ENCODE measurements at regions of chr19 and their contacts with region 1.

Region 1: DNA sequence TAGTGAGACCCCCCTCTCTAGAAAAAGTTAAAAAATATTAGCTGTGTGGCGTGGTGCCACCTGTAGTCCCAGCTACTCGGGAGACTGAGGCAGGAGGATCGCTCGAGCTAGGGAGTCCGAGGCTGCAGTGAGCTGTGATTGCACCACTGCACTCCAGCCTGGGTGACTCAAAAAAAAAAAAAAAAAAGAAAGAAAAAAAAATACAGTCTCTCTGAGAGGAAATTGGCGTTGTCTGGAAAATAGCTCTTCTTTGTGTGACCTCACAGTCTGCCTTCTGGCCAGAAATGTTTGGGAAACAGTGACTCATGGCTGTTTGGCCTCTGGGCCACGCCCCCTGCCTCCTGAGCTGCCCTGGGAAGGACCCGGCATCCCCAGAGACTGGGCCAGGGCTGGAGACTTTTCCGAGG is 10.7 kb downstream of the MARCHF2 start:
- DNase-seq: peak; percentile 93
- ATAC-seq: peak; percentile 83
- H3K4me3 ChIP-seq: peak overlapping the region; percentile 28 to 64 (median 55); a peak in 5 of 6 replicates
- H3K27ac ChIP-seq: peak overlapping the region; percentile 86
- H3K4me1 ChIP-seq: peaks cover 39% of the 10 kb centered on the region
- H3K27me3 ChIP-seq: no peaks in the 10 kb centered on the region
- CTCF ChIP-seq: no peak
- EP300 ChIP-seq: no peak
- POLR2A ChIP-seq: no peak
- RAD21 ChIP-seq: no peak

Region 2: GRCh38 chr19:8321060-8321985 is 102.5 kb before region 1 on chr19 and contains the starts of genes NDUFA7 and RPS28:
- CTCF ChIA-PET with region 1: no interaction called
- POLR2A ChIA-PET with region 1: interaction called, 18 read pairs
- in situ Hi-C with region 1: no loop called
- intact Hi-C with region 1: no loop called
- DNase-seq: peak; percentile 85
- ATAC-seq: peak; percentile 81
- H3K4me3 ChIP-seq: peak within 1 kb of the TSS; percentile 69 to 97 (median 82)
- H3K27ac ChIP-seq: peak within 1 kb of the TSS; percentile 88
- H3K4me1 ChIP-seq: peaks cover 36% of the 10 kb centered on the region
- H3K27me3 ChIP-seq: no peaks in the 10 kb centered on the region; a peak in 1 of 5 replicates
- CTCF ChIP-seq: peak; percentile 79
- EP300 ChIP-seq: no peak
- POLR2A ChIP-seq: peak; percentile 90 to 92
- RAD21 ChIP-seq: peak; percentile 58
- total RNA-seq, gene NDUFA7: 57.2 and 64.5 TPM in 2 replicates
- total RNA-seq, gene RPS28: 281 and 319 TPM in 2 replicates

Region 3: DNA sequence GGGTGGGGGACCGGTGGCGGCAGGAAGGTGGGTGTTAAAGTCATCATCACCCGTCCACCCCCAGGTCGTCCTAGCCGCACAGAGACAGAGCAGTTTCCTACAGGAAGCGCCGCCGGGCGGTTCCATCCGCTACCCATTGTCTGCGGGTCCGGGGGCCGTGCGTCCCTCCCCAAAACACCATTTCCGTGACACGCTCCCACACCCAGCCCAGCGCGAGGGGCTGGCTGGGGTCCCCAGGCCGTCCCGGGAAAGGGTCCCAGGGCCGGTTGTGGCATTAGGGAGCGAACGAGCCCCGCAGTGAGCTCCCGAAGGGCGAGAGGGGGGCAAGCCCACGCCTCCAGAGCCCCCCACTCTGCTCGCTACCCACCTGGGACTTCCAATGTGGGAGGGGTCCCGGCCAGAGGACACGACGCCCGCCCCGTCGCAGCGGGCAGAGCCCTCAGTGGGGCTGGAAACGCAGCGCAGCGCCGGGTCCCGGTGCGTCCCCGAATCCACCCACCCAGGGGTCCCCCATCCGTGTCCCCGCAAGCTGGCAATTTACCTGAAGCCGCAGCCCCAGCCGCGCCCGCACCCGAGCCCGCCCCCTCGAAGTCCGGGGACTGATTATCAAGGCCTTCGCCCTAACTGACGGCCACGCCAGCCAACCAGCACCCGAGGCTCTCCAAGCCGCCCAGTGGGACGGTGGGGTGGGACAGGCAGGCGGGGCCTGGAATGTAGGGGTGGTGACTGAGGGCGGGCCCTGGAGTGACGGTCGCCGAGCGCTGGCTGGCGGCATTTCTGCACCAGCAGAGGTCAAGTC is 80.9 kb before region 1 on chr19 and contains the start of gene KANK3:
- CTCF ChIA-PET with region 1: no interaction called
- POLR2A ChIA-PET with region 1: no interaction called
- in situ Hi-C with region 1: no loop called
- intact Hi-C with region 1: no loop called
- DNase-seq: peak; percentile 90
- ATAC-seq: peak; percentile 97
- H3K4me3 ChIP-seq: peak within 1 kb of the TSS; percentile 47 to 75 (median 51)
- H3K27ac ChIP-seq: no peak within 1 kb of the TSS
- H3K4me1 ChIP-seq: peaks cover 55% of the 10 kb centered on the region
- H3K27me3 ChIP-seq: peaks cover 0 to 11% of the 10 kb centered on the region in 2 experiments; a peak in 3 of 5 replicates
- CTCF ChIP-seq: no peak
- EP300 ChIP-seq: no peak
- POLR2A ChIP-seq: no peak
- RAD21 ChIP-seq: no peak
- total RNA-seq, gene KANK3: 0.15 and 0.18 TPM in 2 replicates

Region 4: GRCh38 chr19:8412783-8413628 is 10.8 kb before region 1 on chr19 and contains the start of gene MARCHF2:
- CTCF ChIA-PET with region 1: no interaction called
- POLR2A ChIA-PET with region 1: interaction called, 67 read pairs
- in situ Hi-C with region 1: no loop called
- intact Hi-C with region 1: no loop called
- DNase-seq: peak; percentile 90
- ATAC-seq: peak; percentile 98
- H3K4me3 ChIP-seq: peak within 1 kb of the TSS; percentile 67 to 92 (median 70)
- H3K27ac ChIP-seq: no peak within 1 kb of the TSS
- H3K4me1 ChIP-seq: peaks cover 30% of the 10 kb centered on the region
- H3K27me3 ChIP-seq: no peaks in the 10 kb centered on the region
- CTCF ChIP-seq: peak; percentile 70
- EP300 ChIP-seq: 0 out of 4 replicates have a peak, but pooled peaks of 1 of the 2 experiments have one; percentile 22
- POLR2A ChIP-seq: peak in 1 of 2 experiments; percentile 28; a peak in 1 of 4 replicates
- RAD21 ChIP-seq: peak; percentile 57
- total RNA-seq, gene MARCHF2: 10.6 and 12.7 TPM in 2 replicates

Region 5: DNA sequence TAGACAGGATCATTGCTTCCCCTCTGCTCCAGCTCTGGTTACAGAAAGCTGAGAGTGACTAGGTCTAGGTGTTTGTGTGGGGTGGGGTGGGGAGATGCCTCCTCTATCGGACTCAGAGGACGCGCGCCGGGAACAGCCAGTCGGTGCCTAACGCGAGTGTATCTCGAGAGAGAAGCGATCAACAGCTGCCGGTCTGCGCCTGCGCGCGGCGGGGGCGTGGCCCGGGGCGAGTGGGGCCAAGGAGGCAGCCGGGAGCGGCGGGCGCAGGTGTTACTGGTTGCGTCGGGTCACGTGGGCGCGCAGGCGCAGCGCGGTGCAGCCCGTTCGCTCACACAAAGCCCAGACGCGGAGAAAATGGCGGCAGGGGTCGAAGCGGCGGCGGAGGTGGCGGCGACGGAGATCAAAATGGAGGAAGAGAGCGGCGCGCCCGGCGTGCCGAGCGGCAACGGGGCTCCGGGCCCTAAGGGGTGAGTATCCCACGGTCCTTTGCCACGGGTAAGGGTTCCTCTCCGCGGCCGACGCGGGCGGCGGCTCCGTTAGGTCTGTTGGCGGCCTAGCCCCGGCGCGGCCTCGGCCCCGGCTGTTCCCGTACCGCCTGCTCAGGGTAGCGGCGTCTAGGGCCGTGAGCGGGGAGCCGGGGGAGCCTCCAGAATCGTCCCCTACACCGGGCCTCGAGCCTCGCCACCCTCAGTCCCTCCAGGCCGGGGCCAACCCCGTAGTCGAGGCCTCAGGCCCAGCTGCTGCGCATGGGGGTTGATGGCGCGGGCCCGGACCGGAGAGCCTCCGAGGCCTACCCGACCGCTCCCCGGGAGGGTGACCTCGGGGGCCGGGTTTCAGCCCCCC is 21.0 kb after region 1 on chr19 and contains the start of gene HNRNPM:
- CTCF ChIA-PET with region 1: no interaction called
- POLR2A ChIA-PET with region 1: interaction called, 82 read pairs
- in situ Hi-C with region 1: no loop called
- intact Hi-C with region 1: no loop called
- DNase-seq: peak; percentile 95
- ATAC-seq: peak; percentile 91
- H3K4me3 ChIP-seq: peak within 1 kb of the TSS; percentile 93 to 99 (median 99)
- H3K27ac ChIP-seq: peak within 1 kb of the TSS; percentile 95
- H3K4me1 ChIP-seq: peaks cover 70% of the 10 kb centered on the region
- H3K27me3 ChIP-seq: no peaks in the 10 kb centered on the region
- CTCF ChIP-seq: 0 out of 2 replicates have a peak, but pooled peaks have one; percentile 2
- EP300 ChIP-seq: 0 out of 4 replicates have a peak, but pooled peaks of 1 of the 2 experiments have one; percentile 16
- POLR2A ChIP-seq: peak; percentile 75 to 85
- RAD21 ChIP-seq: peak; percentile 38
- total RNA-seq, gene HNRNPM: 102 and 144 TPM in 2 replicates

Region 6: DNA sequence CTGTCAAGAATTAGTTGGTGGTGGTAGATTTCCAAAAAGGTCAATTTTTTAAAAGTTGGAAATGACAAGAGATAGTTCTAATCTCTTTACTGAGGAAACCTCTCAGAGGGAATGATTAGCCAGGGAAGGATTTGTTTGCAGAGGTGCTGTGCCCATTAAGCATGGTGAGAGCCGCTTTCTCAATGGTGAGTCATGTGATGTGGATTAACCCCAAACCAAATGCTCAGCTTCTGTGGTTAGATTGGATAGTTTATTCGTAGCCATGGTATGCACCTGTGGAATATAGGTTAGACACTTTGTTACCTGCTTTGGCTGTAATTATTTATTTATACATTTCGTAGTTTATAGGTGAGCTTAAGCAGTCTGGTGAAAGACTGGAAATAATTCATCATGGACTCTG is 28.1 kb after region 1 on chr19:
- CTCF ChIA-PET with region 1: no interaction called
- POLR2A ChIA-PET with region 1: interaction called, 82 read pairs
- in situ Hi-C with region 1: no loop called
- intact Hi-C with region 1: no loop called
- DNase-seq: peak; percentile 28
- ATAC-seq: peak; percentile 22; the same call in 1 of the 3 replicates
- H3K4me3 ChIP-seq: no peak overlapping the region
- H3K27ac ChIP-seq: peak overlapping the region; percentile 27
- H3K4me1 ChIP-seq: peaks cover 75% of the 10 kb centered on the region
- H3K27me3 ChIP-seq: no peaks in the 10 kb centered on the region
- CTCF ChIP-seq: no peak
- EP300 ChIP-seq: no peak
- POLR2A ChIP-seq: no peak
- RAD21 ChIP-seq: no peak

Region 7: GRCh38 chr19:8513687-8514504 is 90.1 kb after region 1 on chr19 and contains the start of gene ZNF414:
- CTCF ChIA-PET with region 1: no interaction called
- POLR2A ChIA-PET with region 1: interaction called, 18 read pairs
- in situ Hi-C with region 1: no loop called
- intact Hi-C with region 1: no loop called
- DNase-seq: peak; percentile 83
- ATAC-seq: peak; percentile 87
- H3K4me3 ChIP-seq: peak within 1 kb of the TSS; percentile 89 to 95 (median 90)
- H3K27ac ChIP-seq: peak within 1 kb of the TSS; percentile 94
- H3K4me1 ChIP-seq: peaks cover 42% of the 10 kb centered on the region
- H3K27me3 ChIP-seq: 0 out of 5 replicates have a peak, but pooled peaks cover 0 to 2% of the 10 kb centered on the region in 2 experiments
- CTCF ChIP-seq: no peak
- EP300 ChIP-seq: no peak
- POLR2A ChIP-seq: peak; percentile 90 to 98
- RAD21 ChIP-seq: peak; percentile 67
- total RNA-seq, gene ZNF414: 1.4 and 2.5 TPM in 2 replicates